BJ (cell line): ENCODE measurements at regions of chr13 and their contacts with region 1.

Region 1: GRCh38 chr13:75788481-75788981 is 152.4 kb downstream of the LMO7 start:
- DNase-seq: peak; percentile 96
- H3K4me3 ChIP-seq: no peak overlapping the region
- H3K27me3 ChIP-seq: no peaks in the 10 kb centered on the region
- CTCF ChIP-seq: no peak

Region 2: DNA sequence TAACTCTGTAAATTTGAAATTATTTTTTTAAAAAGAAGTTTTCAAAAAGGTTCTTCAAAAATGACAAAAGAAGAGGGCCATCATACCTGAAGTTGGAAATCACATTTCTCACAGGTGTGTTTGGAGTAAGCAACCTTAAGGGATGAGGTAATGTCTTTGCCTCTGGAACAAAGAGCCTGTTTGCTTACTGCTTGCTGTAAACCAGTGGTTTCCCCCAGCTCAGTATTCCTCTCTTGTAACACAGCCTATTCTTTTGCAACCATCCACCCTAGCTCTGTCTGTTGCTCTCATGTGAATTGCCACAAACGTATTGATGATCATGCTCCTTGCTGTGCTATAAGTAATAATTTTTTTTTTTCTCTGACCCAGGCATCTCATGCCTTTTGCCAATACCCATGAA is 200.9 kb before region 1 on chr13:
- CTCF ChIA-PET with region 1: no interaction called
- POLR2A ChIA-PET with region 1: interaction called, 14 read pairs
- DNase-seq: no peak
- H3K4me3 ChIP-seq: no peak overlapping the region
- H3K27me3 ChIP-seq: no peaks in the 10 kb centered on the region
- CTCF ChIP-seq: no peak

Region 3: DNA sequence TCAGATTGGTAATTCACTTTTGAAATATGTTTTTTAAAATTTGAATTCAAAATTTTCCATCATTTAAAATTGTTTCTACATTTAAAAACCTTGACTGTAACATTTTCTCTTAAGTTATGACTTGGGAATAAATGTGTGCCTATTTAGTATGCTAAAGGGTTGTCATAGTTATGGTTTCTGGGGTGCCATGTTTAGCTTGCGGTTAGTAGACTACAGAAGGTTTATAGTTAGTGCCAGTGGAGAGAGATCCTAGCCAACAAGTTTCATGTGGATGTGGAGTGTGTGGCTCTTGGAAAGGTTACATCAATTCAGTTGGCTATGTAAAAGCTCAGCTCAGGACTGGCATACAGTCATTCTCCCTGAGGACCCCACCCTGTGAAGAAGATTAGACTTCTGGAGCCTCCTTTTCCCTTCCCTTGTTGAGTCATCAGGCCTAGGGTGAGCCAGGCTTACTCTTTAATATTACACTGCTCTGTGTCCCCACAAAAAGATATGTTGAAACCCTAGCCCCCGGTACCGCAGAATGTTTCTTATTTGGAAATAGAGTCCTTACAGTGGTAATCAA is 132.0 kb before region 1 on chr13:
- CTCF ChIA-PET with region 1: no interaction called
- POLR2A ChIA-PET with region 1: no interaction called
- DNase-seq: no peak
- H3K4me3 ChIP-seq: no peak overlapping the region
- H3K27me3 ChIP-seq: no peaks in the 10 kb centered on the region
- CTCF ChIP-seq: no peak